Calu3 (cell line): ENCODE measurements at regions of chr20 and their contacts with region 1.

Region 1: GRCh38 chr20:31822421-31823330 is 3.5 kb downstream of the MYLK2 start:
- DNase-seq: peak; percentile 88
- H3K4me3 Mint-ChIP-seq: peak overlapping the region; percentile 35
- H3K27ac Mint-ChIP-seq: no peak overlapping the region
- H3K4me1 Mint-ChIP-seq: no peaks in the 10 kb centered on the region
- H3K27me3 Mint-ChIP-seq: no peaks in the 10 kb centered on the region
- CTCF ChIP-seq: peak; percentile 100

Region 2: GRCh38 chr20:31881945-31882344 is 59.3 kb after region 1 on chr20:
- CTCF ChIA-PET with region 1: no interaction called
- intact Hi-C with region 1: no loop called
- DNase-seq: no peak
- H3K4me3 Mint-ChIP-seq: no peak overlapping the region
- H3K27ac Mint-ChIP-seq: no peak overlapping the region
- H3K4me1 Mint-ChIP-seq: peaks cover 8% of the 10 kb centered on the region
- H3K27me3 Mint-ChIP-seq: peaks cover 40% of the 10 kb centered on the region
- CTCF ChIP-seq: no peak

Region 3: GRCh38 chr20:32091888-32092346 is 269.2 kb after region 1 on chr20:
- CTCF ChIA-PET with region 1: interaction called, 3 read pairs
- intact Hi-C with region 1: loop called (anchors 1 kb)
- DNase-seq: peak; percentile 91
- H3K4me3 Mint-ChIP-seq: no peak overlapping the region
- H3K27ac Mint-ChIP-seq: no peak overlapping the region
- H3K4me1 Mint-ChIP-seq: no peaks in the 10 kb centered on the region
- H3K27me3 Mint-ChIP-seq: peaks cover 40% of the 10 kb centered on the region
- CTCF ChIP-seq: peak; percentile 98